AG04450 (cell line): ENCODE measurements at regions of chr1 and their contacts with region 1.

Region 1: DNA sequence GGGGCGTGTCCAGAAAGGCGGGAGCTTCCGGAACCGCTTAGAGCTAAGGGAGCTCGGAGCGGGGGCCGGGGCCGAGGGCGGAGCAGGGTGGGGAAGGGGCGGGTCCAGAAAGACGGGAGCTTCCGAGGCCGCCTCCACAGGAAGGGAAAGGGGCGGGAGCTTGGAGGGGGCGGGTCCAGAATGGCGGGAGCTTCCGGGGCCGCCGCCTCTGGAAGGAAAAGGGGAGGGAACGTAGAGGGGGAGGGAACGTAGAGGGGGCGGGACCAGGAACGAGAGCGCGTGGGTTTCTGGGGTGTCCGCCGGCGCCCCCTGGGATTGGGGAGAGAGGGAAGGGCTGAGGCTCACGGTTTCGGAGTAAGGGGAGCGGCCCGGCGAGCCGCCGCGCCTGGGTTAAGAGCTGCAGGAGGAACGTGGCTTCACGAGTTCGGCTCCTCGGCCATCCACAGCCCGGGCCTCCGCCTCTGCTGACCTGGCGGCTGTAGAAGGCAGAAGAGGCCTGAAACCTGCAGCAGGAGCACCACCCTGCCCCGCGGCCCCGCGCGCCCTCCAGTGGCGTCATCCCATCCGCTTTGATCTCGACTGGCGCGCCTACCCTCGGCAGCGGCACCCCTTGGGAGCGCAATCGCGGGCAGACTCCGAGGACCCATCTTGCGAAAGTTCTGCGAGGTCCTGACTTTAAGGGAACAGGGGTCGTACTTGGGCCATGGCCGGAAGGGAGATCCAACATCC is 22.9 kb upstream of the HPDL start:
- DNase-seq: peak; percentile 93
- H3K4me3 ChIP-seq: peak overlapping the region; percentile 78
- H3K27ac ChIP-seq: peak overlapping the region; percentile 86
- H3K27me3 ChIP-seq: no peaks in the 10 kb centered on the region
- CTCF ChIP-seq: peak; percentile 69

Region 2: GRCh38 chr1:45018599-45019230 is 285.0 kb before region 1 on chr1:
- CTCF ChIA-PET with region 1: interaction called, 616 read pairs
- POLR2A ChIA-PET with region 1: interaction called, 38 read pairs
- DNase-seq: peak; percentile 34
- H3K4me3 ChIP-seq: no peak overlapping the region
- H3K27ac ChIP-seq: no peak overlapping the region
- H3K27me3 ChIP-seq: no peaks in the 10 kb centered on the region
- CTCF ChIP-seq: peak; percentile 85

Region 3: DNA sequence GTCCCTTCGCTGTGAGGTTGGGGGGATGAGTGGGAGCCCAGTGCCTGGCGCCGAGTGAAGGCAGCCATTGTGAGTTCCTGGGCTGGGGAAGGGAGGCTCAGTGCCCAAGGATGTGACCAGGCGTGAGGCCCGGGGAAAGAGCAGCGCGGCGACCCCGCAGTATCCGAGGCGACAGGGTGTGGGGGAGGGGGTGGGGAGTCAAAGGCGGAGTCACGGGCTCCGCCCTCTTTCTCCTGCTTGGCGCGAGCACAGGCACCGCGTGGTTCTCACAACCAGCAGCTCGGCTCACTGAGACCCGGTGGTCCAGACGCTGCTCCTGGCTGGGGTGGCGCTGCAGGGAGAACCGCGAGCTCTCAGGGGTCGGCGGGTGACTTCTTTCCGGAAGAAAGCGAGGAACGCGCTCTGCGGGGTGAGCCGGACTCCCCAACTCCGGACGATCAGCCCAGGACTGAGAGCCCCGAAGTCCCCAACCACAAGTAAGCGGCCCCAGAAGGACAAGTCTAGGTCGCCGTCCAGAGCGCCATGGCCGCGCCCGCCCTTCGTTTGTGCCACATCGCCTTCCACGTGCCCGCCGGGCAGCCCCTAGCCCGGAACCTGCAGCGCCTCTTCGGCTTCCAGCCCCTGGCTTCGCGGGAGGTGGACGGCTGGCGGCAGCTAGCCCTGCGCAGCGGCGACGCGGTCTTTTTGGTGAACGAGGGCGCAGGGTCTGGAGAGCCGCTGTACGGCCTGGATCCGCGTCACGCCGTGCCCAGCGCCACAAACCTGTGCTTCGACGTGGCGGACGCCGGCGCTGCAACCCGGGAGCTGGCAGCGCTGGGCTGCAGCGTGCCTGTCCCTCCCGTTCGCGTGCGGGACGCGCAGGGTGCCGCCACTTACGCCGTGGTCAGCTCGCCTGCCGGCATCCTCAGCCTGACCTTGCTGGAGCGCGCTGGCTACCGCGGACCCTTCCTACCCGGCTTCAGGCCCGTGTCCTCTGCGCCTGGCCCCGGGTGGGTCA is 23.2 kb after region 1 on chr1 and contains the start of gene HPDL:
- CTCF ChIA-PET with region 1: interaction called, 11 read pairs
- POLR2A ChIA-PET with region 1: no interaction called
- DNase-seq: no peak
- H3K4me3 ChIP-seq: peak within 1 kb of the TSS; percentile 65
- H3K27ac ChIP-seq: no peak within 1 kb of the TSS
- H3K27me3 ChIP-seq: no peaks in the 10 kb centered on the region
- CTCF ChIP-seq: no peak
- polyA plus RNA-seq, gene HPDL: 0.22 and 0.50 TPM in 2 replicates

Region 4: DNA sequence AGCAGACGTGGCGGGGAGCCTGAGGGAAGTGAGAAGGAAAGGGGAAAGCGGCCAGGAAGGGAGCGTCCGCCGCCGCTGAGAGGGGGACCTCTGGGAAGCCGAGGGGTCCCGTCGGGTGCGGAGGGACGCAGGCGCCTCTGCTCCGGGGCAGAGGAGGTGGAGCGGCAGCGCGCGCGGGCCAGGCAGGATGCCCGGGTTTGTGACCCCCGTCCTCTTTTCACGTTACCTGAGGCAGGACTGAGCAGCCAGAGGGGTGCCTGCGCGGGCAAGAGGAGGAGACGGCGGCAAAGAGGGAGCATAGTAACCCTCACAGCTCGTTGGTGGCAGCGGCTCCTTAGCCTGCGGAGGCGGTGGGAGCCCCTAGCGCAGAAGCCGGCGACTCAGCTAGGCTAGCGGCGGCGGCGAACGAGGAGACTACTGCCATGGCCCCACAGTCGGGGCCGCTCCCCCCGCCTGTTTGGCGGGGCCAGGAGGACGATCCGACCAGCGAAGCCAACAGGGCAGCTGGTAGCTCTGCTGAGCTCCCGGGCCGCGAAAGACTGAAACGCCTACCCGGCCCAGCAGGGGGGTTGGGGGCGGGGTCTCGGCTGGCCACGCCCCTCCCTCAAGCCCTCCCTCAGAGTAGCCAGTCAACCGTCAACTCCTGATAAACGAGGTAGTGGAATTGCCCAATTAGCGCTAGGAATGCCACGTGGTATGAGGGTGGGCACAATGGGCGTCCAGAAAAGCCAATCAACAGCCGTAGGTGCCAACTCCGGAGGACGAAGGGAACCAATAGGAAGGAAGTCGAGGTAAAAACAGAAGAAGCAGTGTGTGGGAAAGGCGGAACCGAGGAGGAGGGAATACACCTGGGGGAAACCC is 187.1 kb after region 1 on chr1 and contains the start of gene TESK2:
- CTCF ChIA-PET with region 1: interaction called, 15 read pairs
- POLR2A ChIA-PET with region 1: interaction called, 4 read pairs
- DNase-seq: peak; percentile 98
- H3K4me3 ChIP-seq: peak within 1 kb of the TSS; percentile 85
- H3K27ac ChIP-seq: peak within 1 kb of the TSS; percentile 47
- H3K27me3 ChIP-seq: no peaks in the 10 kb centered on the region
- CTCF ChIP-seq: no peak
- polyA plus RNA-seq, gene TESK2: 2.5 and 2.6 TPM in 2 replicates